ENCODE measurements at regions of chr12 and their contacts with region 1.

Region 1: GRCh38 chr12:75994186-75994731 is 37.3 kb downstream of the PHLDA1 start:
- DNase-seq: no peak
- H3K4me3 Mint-ChIP-seq: peak overlapping the region; percentile 5
- H3K27ac Mint-ChIP-seq: peak overlapping the region; percentile 88
- H3K4me1 Mint-ChIP-seq: peaks cover 49% of the 10 kb centered on the region
- H3K27me3 Mint-ChIP-seq: no peaks in the 10 kb centered on the region

Region 2: GRCh38 chr12:75641031-75641780 is 353.1 kb before region 1 on chr12:
- intact Hi-C with region 1: loop called (anchors 1 kb)
- DNase-seq: peak; percentile 32
- H3K4me3 Mint-ChIP-seq: peak overlapping the region; percentile 19
- H3K27ac Mint-ChIP-seq: peak overlapping the region; percentile 89
- H3K4me1 Mint-ChIP-seq: peaks cover 34% of the 10 kb centered on the region
- H3K27me3 Mint-ChIP-seq: no peaks in the 10 kb centered on the region

Region 3: DNA sequence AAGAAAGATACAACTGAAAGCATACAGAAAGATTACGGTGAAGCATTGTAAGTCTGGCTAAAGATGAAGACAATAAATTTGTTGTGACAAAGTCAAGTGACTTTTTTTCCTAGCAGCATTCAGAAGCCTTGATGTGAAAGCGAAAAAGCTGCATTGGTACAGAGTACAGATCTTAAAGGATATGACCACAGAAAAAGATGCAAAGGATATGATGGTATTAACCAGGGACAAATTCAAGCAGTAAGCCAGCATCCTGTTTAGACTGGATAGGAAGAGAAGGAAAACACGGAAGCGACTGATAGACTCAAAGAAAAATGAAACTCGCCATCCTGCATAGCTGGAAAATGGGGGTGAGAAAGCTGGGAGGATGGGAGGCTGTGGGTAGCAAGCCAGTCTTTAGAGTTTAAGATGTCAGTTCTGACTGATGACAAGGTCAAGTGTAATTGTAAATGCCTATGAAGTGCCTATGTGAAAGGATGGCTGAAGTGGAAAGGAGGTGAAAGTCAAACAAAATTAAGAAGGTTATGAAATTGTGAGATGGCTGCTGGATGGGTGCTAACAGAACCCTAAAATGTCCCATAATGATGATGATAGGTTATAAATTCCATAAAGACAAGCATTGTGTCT is 55.1 kb before region 1 on chr12:
- intact Hi-C with region 1: loop called (anchors 1 kb)
- DNase-seq: no peak
- H3K4me3 Mint-ChIP-seq: no peak overlapping the region
- H3K27ac Mint-ChIP-seq: no peak overlapping the region
- H3K4me1 Mint-ChIP-seq: peaks cover 16% of the 10 kb centered on the region
- H3K27me3 Mint-ChIP-seq: peaks cover 4% of the 10 kb centered on the region

Region 4: GRCh38 chr12:75944097-75944904 is 50.0 kb before region 1 on chr12:
- intact Hi-C with region 1: loop called (anchors 1 kb)
- DNase-seq: peak; percentile 27
- H3K4me3 Mint-ChIP-seq: peak overlapping the region; percentile 65
- H3K27ac Mint-ChIP-seq: peak overlapping the region; percentile 98
- H3K4me1 Mint-ChIP-seq: peaks cover 30% of the 10 kb centered on the region
- H3K27me3 Mint-ChIP-seq: no peaks in the 10 kb centered on the region

Region 5: GRCh38 chr12:76020731-76021672 is 26.7 kb after region 1 on chr12:
- intact Hi-C with region 1: loop called (anchors 1 kb)
- DNase-seq: peak; percentile 68
- H3K4me3 Mint-ChIP-seq: peak overlapping the region; percentile 74
- H3K27ac Mint-ChIP-seq: peak overlapping the region; percentile 99
- H3K4me1 Mint-ChIP-seq: peaks cover 73% of the 10 kb centered on the region
- H3K27me3 Mint-ChIP-seq: no peaks in the 10 kb centered on the region

Region 6: DNA sequence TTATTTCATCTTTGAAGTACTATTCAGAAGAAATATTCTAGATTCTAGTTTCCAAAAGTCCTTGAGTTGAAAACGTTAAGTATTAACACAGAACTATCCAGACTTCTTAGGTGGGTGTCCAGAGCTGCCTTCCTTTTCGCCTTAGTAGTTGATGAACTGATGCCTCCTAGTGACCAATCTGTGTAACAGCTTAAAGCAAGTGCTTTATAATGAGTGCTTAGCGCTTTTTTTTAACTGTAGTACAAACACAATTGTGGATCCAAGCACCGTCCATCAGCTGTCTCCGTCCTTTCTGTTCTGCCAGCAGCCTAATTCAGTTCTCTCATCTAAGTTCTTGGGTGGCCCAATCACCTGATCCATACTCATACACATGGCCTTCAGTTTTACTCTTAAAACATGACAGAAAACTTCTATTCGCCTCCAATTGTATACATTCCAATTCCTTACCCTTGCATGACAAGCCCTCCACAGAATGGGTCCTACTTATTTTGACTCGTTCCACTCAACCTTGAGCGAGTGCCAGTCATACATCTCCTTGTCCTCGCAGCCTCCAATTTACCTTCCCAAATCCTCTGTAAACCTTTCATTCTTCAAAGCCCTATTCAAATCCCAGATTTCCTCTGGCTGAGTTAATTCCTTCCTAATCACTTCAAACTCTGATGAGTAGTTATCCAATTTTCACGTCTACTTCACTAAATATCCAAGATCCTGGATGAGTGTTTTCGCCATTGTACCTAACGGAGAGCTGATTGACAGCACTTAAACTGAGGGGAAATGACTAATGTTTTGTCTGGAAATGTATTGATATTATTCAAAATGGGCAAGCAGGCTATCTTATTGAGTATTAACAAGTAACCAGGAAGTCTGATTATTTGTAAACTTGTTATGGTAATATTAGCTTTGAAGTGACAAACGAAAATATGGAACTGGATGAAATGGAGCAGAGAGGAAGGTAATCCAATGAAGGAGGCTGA is 43.2 kb after region 1 on chr12:
- intact Hi-C with region 1: no loop called
- DNase-seq: peak; percentile 26
- H3K4me3 Mint-ChIP-seq: no peak overlapping the region
- H3K27ac Mint-ChIP-seq: peak overlapping the region; percentile 0
- H3K4me1 Mint-ChIP-seq: peaks cover 24% of the 10 kb centered on the region
- H3K27me3 Mint-ChIP-seq: no peaks in the 10 kb centered on the region